ENCODE measurements at regions of chr3 and their contacts with region 1.

Region 1: DNA sequence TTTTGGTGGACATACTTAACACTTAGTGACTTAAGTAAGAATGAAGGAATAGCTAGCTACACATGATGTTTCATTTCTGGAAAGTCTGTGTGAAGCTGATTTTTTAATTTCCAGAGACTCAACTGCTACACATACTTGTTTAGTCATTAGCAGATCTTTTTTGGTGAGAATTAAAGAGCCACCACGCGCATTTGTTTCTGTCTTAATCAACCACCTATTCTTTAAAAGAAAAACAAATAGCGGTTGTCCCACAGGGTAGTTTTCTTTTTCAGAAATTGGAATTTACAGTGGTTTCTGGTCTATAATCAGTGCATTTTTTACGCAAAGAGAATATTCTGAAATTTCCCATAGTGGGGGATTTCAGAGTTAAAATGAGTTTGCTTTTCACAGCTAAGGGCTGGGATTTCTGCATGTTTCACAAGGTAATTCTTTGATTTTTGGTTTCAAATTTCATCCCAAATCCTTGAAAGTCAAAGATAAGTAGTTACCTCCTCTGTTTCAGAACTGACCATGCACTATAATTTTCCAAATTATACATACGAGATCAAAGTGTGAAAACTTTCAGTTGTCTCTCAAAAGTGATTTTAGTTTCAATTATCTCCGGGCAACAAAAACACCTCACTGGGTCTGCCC is 631.0 kb upstream of the GRM7 start:
- DNase-seq: no peak
- ATAC-seq: no peak
- H3K4me3 Mint-ChIP-seq: no peak overlapping the region
- H3K27ac Mint-ChIP-seq: no peak overlapping the region
- H3K4me1 Mint-ChIP-seq: no peaks in the 10 kb centered on the region
- H3K27me3 Mint-ChIP-seq: no peaks in the 10 kb centered on the region

Region 2: DNA sequence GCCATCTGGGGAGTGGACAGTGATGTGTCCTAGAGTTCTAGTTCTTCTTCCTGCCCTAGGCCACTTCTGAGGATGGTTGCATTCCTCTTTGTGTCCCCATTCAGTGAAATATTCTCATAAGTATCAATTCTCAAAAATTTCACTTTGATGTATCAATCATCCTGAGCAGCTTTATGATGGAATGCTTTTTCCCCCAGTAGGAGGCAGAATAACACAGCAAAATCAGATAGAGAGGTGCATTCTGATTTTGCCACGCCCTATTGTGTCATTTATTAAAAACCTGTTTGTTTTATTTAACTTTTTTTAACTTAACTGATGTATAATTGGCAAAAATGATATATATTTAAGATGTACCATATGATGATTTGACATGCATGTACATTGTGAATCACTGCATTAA is 25.0 kb before region 1 on chr3:
- CTCF ChIA-PET with region 1: no interaction called
- POLR2A ChIA-PET with region 1: no interaction called
- intact Hi-C with region 1: loop called in 1 of 2 experiments (anchors 1 kb)
- DNase-seq: no peak
- ATAC-seq: no peak
- H3K4me3 Mint-ChIP-seq: no peak overlapping the region
- H3K27ac Mint-ChIP-seq: no peak overlapping the region
- H3K4me1 Mint-ChIP-seq: no peaks in the 10 kb centered on the region
- H3K27me3 Mint-ChIP-seq: no peaks in the 10 kb centered on the region